PC-3 (cell line): ENCODE measurements at regions of chr16 and their contacts with region 1.

Region 1: GRCh38 chr16:23274969-23275368 is 27.1 kb upstream of the SCNN1B start:
- DNase-seq: peak; percentile 27
- ATAC-seq: peak; percentile 42; the same call in 1 of the 2 replicates
- H3K4me3 ChIP-seq: no peak overlapping the region
- H3K27ac ChIP-seq: no peak overlapping the region
- H3K4me1 ChIP-seq: peaks cover 12% of the 10 kb centered on the region
- H3K27me3 ChIP-seq: no peaks in the 10 kb centered on the region
- CTCF ChIP-seq: no peak

Region 2: GRCh38 chr16:23232806-23233205 is 42.2 kb before region 1 on chr16:
- CTCF ChIA-PET with region 1: no interaction called
- POLR2A ChIA-PET with region 1: interaction called, 11 read pairs
- intact Hi-C with region 1: no loop called
- DNase-seq: no peak
- ATAC-seq: no peak
- H3K4me3 ChIP-seq: no peak overlapping the region
- H3K27ac ChIP-seq: no peak overlapping the region
- H3K4me1 ChIP-seq: peaks cover 19% of the 10 kb centered on the region
- H3K27me3 ChIP-seq: no peaks in the 10 kb centered on the region
- CTCF ChIP-seq: no peak

Region 3: DNA sequence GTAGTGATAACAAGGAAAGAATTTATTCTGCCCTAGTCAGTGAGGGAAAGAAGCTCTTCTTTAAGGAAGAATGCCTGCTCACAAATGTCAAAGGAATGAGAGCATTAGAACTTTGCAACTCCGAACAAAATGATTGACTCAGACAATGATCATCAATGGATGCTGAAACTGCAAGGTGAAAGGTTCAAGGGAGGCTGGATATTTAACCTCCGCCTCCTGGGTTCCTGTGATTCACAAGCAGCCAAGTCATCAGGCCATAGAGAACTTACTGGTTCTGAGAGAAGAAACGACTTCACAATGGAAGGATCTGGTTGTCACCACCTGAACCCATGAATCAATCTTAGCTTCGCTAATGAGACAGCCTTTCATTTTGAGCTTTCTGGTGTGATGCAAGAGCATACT is 11.2 kb after region 1 on chr16:
- CTCF ChIA-PET with region 1: no interaction called
- POLR2A ChIA-PET with region 1: no interaction called
- intact Hi-C with region 1: no loop called
- DNase-seq: peak; percentile 86
- ATAC-seq: no peak
- H3K4me3 ChIP-seq: no peak overlapping the region
- H3K27ac ChIP-seq: peak overlapping the region; percentile 78
- H3K4me1 ChIP-seq: peaks cover 51% of the 10 kb centered on the region
- H3K27me3 ChIP-seq: no peaks in the 10 kb centered on the region
- CTCF ChIP-seq: no peak